PC-3 (cell line): ENCODE measurements at regions of chr20 and their contacts with region 1.

Region 1: DNA sequence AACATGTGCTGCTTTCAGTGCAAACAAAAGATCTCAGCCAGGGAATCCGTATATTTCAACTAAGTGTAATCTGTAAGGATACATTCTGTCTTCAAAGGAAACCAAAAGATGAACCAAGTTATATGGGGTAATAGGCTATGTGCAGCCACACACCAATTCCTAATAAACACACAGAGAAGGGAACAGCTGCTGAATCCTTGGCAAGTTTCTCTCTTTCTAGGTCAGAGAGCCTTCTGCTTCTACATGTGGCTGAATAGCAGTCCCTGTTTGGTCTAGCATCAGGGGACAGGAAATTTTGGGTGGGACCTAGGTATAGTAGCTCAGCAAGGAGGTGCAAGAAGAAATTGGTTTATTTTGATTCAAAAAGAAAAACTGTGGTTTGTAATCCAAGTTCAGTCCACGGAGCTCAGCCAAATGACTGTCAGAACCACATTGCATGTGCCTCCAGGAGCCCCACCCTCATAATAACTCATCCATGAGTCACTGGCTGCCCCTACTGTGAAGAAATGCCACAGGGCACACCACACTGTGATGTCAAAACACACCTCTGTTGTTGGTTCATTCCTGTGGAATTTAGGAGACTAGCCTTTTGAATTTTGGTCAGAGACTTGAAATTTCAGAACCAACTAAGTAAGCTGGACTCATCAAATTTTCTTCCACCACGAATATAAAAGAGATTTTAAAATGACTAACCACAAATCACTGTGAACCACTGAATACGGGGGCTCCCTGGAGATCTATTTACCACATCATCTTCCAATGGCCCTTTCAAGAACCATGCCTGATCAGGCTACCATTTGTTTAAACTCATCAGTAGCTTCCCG is 21.1 kb downstream of the SPTLC3 start:
- DNase-seq: peak; percentile 99
- ATAC-seq: peak; percentile 95
- H3K4me3 ChIP-seq: peak overlapping the region; percentile 51
- H3K27ac ChIP-seq: peak overlapping the region; percentile 88
- H3K4me1 ChIP-seq: peaks cover 43% of the 10 kb centered on the region
- H3K27me3 ChIP-seq: no peaks in the 10 kb centered on the region
- CTCF ChIP-seq: no peak

Region 2: DNA sequence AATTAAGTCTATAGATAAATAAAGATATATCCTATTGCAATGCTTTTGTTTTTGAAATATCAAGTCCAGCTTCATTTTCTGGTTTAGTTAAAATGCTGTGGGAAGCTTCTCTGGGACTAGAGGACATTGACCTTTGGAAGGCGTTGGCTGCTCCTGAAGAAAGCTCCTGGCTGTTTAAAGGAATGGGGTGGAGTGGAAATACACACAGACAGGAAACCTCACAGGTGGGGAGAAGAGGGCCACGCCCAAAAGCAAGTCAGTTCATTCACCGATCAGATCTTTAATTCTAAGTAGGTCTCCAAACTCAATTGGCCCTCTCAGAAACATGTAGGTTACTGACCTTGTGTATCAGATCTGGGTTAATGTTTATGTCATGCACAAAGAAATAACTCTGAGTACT is 38.5 kb after region 1 on chr20:
- CTCF ChIA-PET with region 1: no interaction called
- POLR2A ChIA-PET with region 1: no interaction called
- intact Hi-C with region 1: loop called (anchors 1 kb)
- DNase-seq: peak; percentile 45
- ATAC-seq: peak; percentile 61
- H3K4me3 ChIP-seq: no peak overlapping the region
- H3K27ac ChIP-seq: no peak overlapping the region
- H3K4me1 ChIP-seq: peaks cover 13% of the 10 kb centered on the region
- H3K27me3 ChIP-seq: no peaks in the 10 kb centered on the region
- CTCF ChIP-seq: no peak